A673 (cell line): ENCODE measurements at regions of chr16 and their contacts with region 1.

Region 1: DNA sequence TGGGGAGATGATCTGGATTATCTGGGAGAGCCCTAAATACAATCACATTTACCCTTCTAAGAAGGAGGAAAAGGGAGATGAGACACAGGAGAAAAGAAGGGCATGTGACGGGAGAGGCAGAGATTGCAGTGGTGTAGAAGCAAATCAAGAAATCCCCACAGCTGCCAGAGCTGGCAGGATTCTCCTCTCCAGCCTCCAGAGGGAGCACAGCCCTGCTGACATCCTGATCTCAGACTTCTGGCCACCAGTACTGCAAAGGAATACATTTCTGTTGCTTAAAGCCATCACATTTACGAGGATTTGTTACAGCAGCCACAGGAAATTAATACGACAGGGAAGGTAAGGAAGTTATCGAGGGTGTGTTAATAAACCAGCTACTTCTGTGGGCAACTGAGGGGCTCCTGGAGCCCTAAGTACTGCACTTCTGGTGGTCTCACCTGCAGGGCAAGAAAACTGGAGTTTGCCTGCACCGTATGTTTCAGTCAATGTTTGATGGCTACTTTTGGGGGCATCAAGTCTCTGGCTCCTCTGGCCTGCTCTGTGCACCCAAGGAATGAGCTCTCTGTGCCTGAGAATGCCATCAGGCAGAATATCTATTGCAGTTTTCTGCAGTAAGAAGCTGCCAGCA is 22.9 kb upstream of the CDH13 start:
- DNase-seq: peak; percentile 36
- H3K4me3 ChIP-seq: no peak overlapping the region
- H3K27ac ChIP-seq: no peak overlapping the region
- H3K4me1 ChIP-seq: no peaks in the 10 kb centered on the region
- H3K27me3 ChIP-seq: peaks cover 16% of the 10 kb centered on the region
- CTCF ChIP-seq: peak; percentile 51

Region 2: DNA sequence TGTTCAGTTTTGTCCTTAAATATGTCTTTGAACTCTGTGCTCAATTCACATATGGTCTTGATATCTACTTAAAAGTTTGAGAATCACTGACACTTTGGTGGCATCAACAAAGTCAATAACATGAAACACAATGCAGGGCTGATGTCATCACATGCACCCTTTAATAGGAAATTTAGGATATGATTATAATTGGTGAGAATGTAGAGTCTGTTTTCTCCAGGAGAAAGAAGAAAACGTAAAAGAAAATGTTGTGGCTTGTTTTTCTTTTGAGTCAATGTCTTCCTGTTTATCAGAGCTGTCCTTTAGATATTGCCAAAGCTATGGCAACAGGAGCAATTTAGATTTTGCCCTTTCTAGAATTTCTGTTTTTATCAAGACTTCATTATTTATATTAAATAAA is 419.7 kb after region 1 on chr16:
- CTCF ChIA-PET with region 1: interaction called, 13 read pairs
- POLR2A ChIA-PET with region 1: no interaction called
- intact Hi-C with region 1: no loop called
- DNase-seq: no peak
- H3K4me3 ChIP-seq: no peak overlapping the region
- H3K27ac ChIP-seq: no peak overlapping the region
- H3K4me1 ChIP-seq: no peaks in the 10 kb centered on the region
- H3K27me3 ChIP-seq: no peaks in the 10 kb centered on the region
- CTCF ChIP-seq: no peak

Region 3: GRCh38 chr16:83651871-83652270 is 1048.0 kb after region 1 on chr16:
- CTCF ChIA-PET with region 1: no interaction called
- POLR2A ChIA-PET with region 1: interaction called, 15 read pairs
- intact Hi-C with region 1: no loop called
- DNase-seq: peak; percentile 55
- H3K4me3 ChIP-seq: no peak overlapping the region
- H3K27ac ChIP-seq: no peak overlapping the region
- H3K4me1 ChIP-seq: no peaks in the 10 kb centered on the region
- H3K27me3 ChIP-seq: peaks cover 40% of the 10 kb centered on the region
- CTCF ChIP-seq: no peak